Prostate gland (tissue), 2 donors: ENCODE measurements at regions of chr4 and their contacts with region 1.

Region 1: GRCh38 chr4:119314356-119314755 is 7.6 kb downstream of the FABP2 start:
- DNase-seq: no peak
- H3K4me3 ChIP-seq: no peak overlapping the region
- H3K27ac ChIP-seq: no peak overlapping the region
- H3K4me1 ChIP-seq: no peaks in the 10 kb centered on the region
- H3K27me3 ChIP-seq: no peaks in the 10 kb centered on the region
- CTCF ChIP-seq: peak in 2 of 4 experiments; percentile 41 to 52
- POLR2A ChIP-seq: no peak

Region 2: GRCh38 chr4:119068529-119068962 is 245.8 kb before region 1 on chr4:
- intact Hi-C with region 1: no loop called
- DNase-seq: no peak
- H3K4me3 ChIP-seq: no peak overlapping the region
- H3K27ac ChIP-seq: peak overlapping the region in 1 of 2 donors; percentile 31
- H3K4me1 ChIP-seq: no peaks in the 10 kb centered on the region
- H3K27me3 ChIP-seq: no peaks in the 10 kb centered on the region
- CTCF ChIP-seq: no peak
- POLR2A ChIP-seq: no peak

Region 3: DNA sequence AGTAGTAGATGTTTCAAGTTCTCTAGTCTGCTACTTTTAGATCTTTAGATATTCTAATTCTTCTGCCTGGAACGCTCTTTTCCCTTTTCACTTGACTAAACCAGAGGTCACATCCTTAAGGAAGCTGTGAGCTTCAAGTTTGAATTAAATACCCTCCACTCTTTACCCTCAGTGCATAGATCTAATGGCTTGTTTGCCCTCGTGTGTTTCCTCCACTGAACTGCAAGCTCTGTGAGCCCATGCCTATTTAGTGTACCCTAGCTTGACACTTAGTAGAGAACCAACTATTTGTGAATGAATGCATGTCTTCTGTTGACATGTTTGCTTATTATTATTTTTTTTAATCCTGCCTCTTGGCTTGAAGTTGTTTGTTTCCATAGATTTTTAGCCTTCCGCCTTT is 176.0 kb after region 1 on chr4:
- intact Hi-C with region 1: loop called (anchors 10 kb)
- DNase-seq: no peak
- H3K4me3 ChIP-seq: no peak overlapping the region
- H3K27ac ChIP-seq: no peak overlapping the region
- H3K4me1 ChIP-seq: no peaks in the 10 kb centered on the region
- H3K27me3 ChIP-seq: no peaks in the 10 kb centered on the region
- CTCF ChIP-seq: peak in 1 of 4 experiments; percentile 6
- POLR2A ChIP-seq: no peak

Region 4: DNA sequence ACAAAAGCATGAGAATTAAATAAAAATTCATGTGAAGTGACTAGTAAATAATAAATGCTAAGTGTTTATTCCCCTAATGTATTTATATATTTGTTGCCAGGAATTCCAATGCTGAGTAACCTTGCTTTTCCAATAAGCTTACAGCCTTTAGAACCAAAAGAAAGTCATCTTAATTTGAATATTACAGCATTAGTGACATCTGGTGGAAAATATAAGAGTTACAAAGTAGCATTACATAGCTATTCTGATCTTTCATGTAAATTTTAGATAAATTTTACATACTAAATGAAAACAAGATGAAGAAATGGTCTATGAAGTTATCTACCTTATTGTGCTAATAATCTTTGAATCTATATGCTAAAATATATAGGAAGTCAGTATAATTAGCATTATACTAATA is 741.9 kb after region 1 on chr4:
- intact Hi-C with region 1: loop called (anchors 2 kb)
- DNase-seq: no peak
- H3K4me3 ChIP-seq: no peak overlapping the region
- H3K27ac ChIP-seq: no peak overlapping the region
- H3K4me1 ChIP-seq: no peaks in the 10 kb centered on the region
- H3K27me3 ChIP-seq: no peaks in the 10 kb centered on the region
- CTCF ChIP-seq: peak in 2 of 4 experiments; percentile 19 to 37
- POLR2A ChIP-seq: no peak